H1 (cell line): ENCODE measurements at regions of chr7 and their contacts with region 1.

Region 1: GRCh38 chr7:116236020-116236630 is 25.8 kb downstream of the TES start:
- DNase-seq: no peak
- H3K4me3 ChIP-seq: no peak overlapping the region
- H3K27ac ChIP-seq: no peak overlapping the region
- H3K4me1 ChIP-seq: no peaks in the 10 kb centered on the region; a peak in 1 of 7 replicates
- H3K27me3 ChIP-seq: no peaks in the 10 kb centered on the region
- CTCF ChIP-seq: peak in 1 of 3 experiments; percentile 43; a peak in 1 of 4 replicates
- EP300 ChIP-seq: no peak
- POLR2A ChIP-seq: no peak
- RAD21 ChIP-seq: peak; percentile 69 to 77

Region 2: DNA sequence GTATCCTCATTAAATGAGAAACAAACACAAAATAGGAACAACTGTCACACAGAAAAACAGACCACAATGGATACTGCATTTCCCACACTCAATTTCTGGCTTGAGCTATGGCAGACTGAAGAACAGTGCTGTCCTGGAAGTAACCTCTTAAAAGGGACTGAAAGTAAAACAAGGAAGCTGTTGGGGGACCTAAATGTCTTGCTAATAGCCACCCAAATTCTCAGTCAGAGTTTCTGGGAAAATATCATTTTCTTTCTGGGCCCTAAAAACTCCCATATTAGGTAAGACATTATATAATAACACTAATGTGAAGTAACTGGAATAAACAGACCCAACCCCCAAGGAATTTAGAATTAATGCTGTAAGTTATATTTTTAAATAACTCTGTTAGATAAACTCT is 124.7 kb before region 1 on chr7:
- CTCF ChIA-PET with region 1: no interaction called
- POLR2A ChIA-PET with region 1: no interaction called
- DNase-seq: no peak
- H3K4me3 ChIP-seq: no peak overlapping the region
- H3K27ac ChIP-seq: no peak overlapping the region
- H3K4me1 ChIP-seq: no peaks in the 10 kb centered on the region
- H3K27me3 ChIP-seq: no peaks in the 10 kb centered on the region
- CTCF ChIP-seq: no peak
- EP300 ChIP-seq: no peak
- POLR2A ChIP-seq: no peak
- RAD21 ChIP-seq: no peak

Region 3: GRCh38 chr7:116173051-116174028 is 62.8 kb before region 1 on chr7:
- CTCF ChIA-PET with region 1: interaction called, 175 read pairs
- POLR2A ChIA-PET with region 1: no interaction called
- DNase-seq: no peak
- H3K4me3 ChIP-seq: no peak overlapping the region
- H3K27ac ChIP-seq: no peak overlapping the region
- H3K4me1 ChIP-seq: no peaks in the 10 kb centered on the region; a peak in 1 of 7 replicates
- H3K27me3 ChIP-seq: no peaks in the 10 kb centered on the region
- CTCF ChIP-seq: peak in 1 of 3 experiments; percentile 18; a peak in 2 of 4 replicates
- EP300 ChIP-seq: no peak
- POLR2A ChIP-seq: no peak
- RAD21 ChIP-seq: peak; percentile 62 to 68

Region 4: DNA sequence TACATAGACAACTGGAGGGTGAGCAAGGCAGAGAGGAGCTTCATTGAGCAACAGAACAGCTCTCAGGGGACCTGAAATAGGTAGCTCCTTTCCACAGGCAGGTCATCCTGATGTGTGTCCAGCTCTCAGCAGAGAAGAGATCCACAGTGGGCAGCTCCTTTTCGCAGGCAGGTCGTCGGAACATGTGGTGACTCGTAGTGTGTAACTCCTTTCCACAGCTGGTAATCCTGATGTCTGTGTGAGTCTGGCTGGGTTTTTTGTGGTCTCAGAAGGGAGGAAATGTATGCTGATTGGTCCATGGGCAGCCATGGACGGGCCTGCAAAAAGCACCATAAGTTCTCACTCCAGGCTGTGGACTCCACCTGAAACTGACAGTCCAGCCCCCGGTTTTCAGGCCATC is 50.2 kb before region 1 on chr7:
- CTCF ChIA-PET with region 1: interaction called, 175 read pairs
- POLR2A ChIA-PET with region 1: no interaction called
- DNase-seq: no peak
- H3K4me3 ChIP-seq: no peak overlapping the region
- H3K27ac ChIP-seq: no peak overlapping the region
- H3K4me1 ChIP-seq: no peaks in the 10 kb centered on the region
- H3K27me3 ChIP-seq: no peaks in the 10 kb centered on the region
- CTCF ChIP-seq: no peak
- EP300 ChIP-seq: no peak
- POLR2A ChIP-seq: no peak
- RAD21 ChIP-seq: no peak

Region 5: DNA sequence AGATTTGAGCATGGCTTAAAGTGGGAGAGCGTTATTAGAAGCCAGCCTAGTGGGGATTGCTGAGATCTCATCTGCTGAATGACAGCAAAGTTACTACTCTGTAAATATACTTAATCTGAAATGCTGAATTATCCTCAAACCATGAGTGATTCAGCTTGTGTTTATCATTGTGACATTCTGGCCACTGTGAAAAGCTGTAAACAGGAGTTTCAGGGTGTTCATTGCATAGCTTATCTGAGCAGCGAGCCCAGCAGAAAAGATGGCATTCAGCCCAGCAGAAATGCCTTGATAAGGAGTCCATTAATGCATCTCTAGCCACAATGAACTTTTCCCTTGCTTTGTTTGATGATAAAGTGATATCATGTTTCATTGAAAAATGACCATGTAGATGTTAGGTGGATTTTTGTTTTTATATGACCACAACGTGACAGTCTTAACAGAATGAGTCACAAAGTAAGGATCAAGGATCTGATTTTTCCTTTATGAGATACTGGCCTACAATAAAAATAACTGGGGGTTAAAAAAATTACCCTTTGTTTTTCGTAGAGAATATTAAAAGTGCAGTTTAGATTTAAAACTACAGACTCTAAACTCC is 18.0 kb before region 1 on chr7:
- CTCF ChIA-PET with region 1: interaction called, 23 read pairs
- POLR2A ChIA-PET with region 1: interaction called, 3 read pairs
- DNase-seq: no peak
- H3K4me3 ChIP-seq: no peak overlapping the region
- H3K27ac ChIP-seq: no peak overlapping the region
- H3K4me1 ChIP-seq: no peaks in the 10 kb centered on the region
- H3K27me3 ChIP-seq: no peaks in the 10 kb centered on the region
- CTCF ChIP-seq: no peak
- EP300 ChIP-seq: no peak
- POLR2A ChIP-seq: no peak
- RAD21 ChIP-seq: no peak

Region 6: GRCh38 chr7:116249708-116250553 is 13.8 kb after region 1 on chr7:
- CTCF ChIA-PET with region 1: interaction called, 11 read pairs
- POLR2A ChIA-PET with region 1: interaction called, 4 read pairs
- DNase-seq: peak in 1 of 2 experiments; percentile 54
- H3K4me3 ChIP-seq: no peak overlapping the region
- H3K27ac ChIP-seq: no peak overlapping the region
- H3K4me1 ChIP-seq: peaks cover 0 to 2% (median 0%) of the 10 kb centered on the region in 4 experiments; a peak in 1 of 7 replicates
- H3K27me3 ChIP-seq: no peaks in the 10 kb centered on the region
- CTCF ChIP-seq: peak; percentile 60 to 76 (median 69)
- EP300 ChIP-seq: no peak
- POLR2A ChIP-seq: no peak
- RAD21 ChIP-seq: peak; percentile 46 to 64